MCF 10A (cell line): ENCODE measurements at regions of chr18 and their contacts with region 1.

Region 1: GRCh38 chr18:47895565-47896250 is 34.8 kb downstream of the SMAD2 start:
- DNase-seq: no peak
- H3K4me3 Mint-ChIP-seq: no peak overlapping the region
- H3K27ac Mint-ChIP-seq: no peak overlapping the region
- H3K4me1 Mint-ChIP-seq: peaks cover 22% of the 10 kb centered on the region
- H3K27me3 Mint-ChIP-seq: no peaks in the 10 kb centered on the region
- CTCF ChIP-seq: no peak

Region 2: DNA sequence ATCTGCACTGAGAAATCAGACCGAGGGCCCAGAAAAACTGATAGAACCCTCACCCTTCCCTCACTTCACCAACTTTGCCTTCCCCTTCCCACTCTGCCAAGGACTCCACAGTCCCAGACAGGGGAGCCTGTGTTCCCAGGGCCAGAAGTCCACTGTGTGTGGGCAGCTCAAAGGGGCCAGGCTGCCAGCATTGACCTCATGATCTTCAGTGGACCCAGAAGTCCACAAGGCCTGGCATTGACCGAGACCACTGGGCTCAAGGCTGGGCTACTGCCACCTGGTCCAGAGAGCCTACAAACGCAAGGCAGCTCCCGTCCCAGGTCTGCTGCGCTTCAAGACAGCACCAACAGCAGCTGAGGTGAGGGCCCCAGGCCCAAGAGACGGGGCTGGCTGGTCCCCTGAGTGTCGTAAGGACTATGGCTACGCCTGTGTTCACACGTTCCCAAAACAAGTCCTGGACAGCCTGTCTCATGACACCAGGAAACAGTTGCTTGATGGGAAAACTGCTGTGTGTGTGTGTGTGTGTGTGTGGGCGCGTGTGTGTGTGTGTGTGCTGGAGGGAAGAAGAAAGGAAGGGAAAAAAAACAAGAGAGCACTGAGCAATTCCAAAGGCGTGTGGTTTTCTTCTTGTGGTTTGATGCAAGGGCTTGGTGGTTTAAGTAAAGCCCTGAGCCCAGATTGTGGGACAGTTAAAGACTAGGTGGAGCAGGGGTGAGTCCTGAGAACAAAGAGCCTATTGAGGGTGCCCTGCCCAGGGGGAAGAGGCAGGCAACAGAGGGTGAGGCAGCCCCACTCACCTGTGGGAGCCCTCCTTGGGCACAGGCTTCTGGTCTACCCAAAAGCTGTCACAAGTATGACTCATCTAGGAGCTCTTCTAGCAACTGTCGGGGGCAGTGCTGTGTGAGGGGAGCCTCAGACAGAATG is 560.1 kb after region 1 on chr18:
- CTCF ChIA-PET with region 1: interaction called, 10 read pairs
- POLR2A ChIA-PET with region 1: no interaction called
- intact Hi-C with region 1: no loop called
- DNase-seq: peak; percentile 49
- H3K4me3 Mint-ChIP-seq: no peak overlapping the region
- H3K27ac Mint-ChIP-seq: peak overlapping the region; percentile 50
- H3K4me1 Mint-ChIP-seq: peaks cover 23% of the 10 kb centered on the region
- H3K27me3 Mint-ChIP-seq: no peaks in the 10 kb centered on the region
- CTCF ChIP-seq: no peak